ENCODE measurements at regions of chr18 and their contacts with region 1.

Region 1: GRCh38 chr18:3219631-3220335 is at the start of gene MYOM1:
- DNase-seq: no peak
- H3K4me3 Mint-ChIP-seq: no peak within 1 kb of the TSS
- H3K27ac Mint-ChIP-seq: no peak within 1 kb of the TSS
- H3K4me1 Mint-ChIP-seq: no peaks in the 10 kb centered on the region
- H3K27me3 Mint-ChIP-seq: peaks cover 12% of the 10 kb centered on the region
- total RNA-seq, gene MYOM1: 0.22 and 1.4 TPM in 2 replicates

Region 2: GRCh38 chr18:2494921-2495320 is 724.9 kb before region 1 on chr18:
- intact Hi-C with region 1: no loop called
- DNase-seq: no peak
- H3K4me3 Mint-ChIP-seq: no peak overlapping the region
- H3K27ac Mint-ChIP-seq: no peak overlapping the region
- H3K4me1 Mint-ChIP-seq: no peaks in the 10 kb centered on the region
- H3K27me3 Mint-ChIP-seq: peaks cover 6% of the 10 kb centered on the region

Region 3: DNA sequence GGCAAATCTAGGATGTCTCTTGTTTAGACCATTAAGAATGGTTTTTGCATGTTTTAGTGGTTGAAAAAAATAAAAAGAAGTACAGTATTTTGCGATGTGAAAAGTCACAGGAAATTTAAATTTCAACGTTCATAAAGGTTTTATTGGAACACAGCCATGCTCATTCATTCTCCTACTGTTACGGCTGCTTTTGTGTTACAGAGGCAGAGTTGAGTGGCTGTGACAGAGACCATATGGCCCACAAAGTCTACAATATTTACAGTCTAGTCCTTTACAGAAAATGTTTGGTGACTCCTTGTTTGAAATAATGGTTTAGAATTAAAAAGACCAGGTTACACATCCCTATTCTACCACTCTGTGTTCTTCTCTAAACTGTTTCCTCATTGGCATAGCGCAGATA is 48.2 kb before region 1 on chr18:
- intact Hi-C with region 1: loop called (anchors 5 kb)
- DNase-seq: no peak
- H3K4me3 Mint-ChIP-seq: no peak overlapping the region
- H3K27ac Mint-ChIP-seq: no peak overlapping the region
- H3K4me1 Mint-ChIP-seq: peaks cover 8% of the 10 kb centered on the region
- H3K27me3 Mint-ChIP-seq: peaks cover 5% of the 10 kb centered on the region

Region 4: DNA sequence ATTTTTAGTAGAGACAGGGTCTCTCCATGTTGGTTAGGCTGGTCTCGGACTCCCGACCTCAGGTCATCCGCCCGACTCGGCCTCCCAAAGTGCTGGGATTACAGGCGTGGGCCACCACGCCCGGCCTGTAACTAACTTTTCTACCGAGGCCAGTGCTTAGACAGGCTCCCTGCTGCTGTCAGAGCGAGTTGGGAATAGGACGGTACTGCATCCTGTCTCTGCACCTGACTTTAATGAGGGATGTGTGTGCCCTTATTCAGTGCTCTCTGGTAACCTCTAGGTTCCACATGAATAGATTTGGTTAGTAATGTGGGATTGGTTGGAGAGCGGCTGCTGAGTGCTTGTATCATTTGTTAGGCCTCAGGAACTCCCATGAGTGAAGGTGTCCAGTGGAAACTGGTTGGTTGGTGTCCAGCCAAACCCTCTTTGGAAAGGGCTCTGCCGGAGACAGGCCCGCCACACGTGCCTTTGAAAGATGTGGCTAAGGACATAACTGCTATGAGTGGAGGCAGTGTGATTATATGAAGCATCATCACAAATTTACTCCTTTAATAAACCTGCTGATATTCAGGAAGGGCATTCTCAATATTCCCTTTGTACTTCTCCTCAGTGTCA is 36.6 kb before region 1 on chr18:
- intact Hi-C with region 1: no loop called
- DNase-seq: no peak
- H3K4me3 Mint-ChIP-seq: no peak overlapping the region
- H3K27ac Mint-ChIP-seq: no peak overlapping the region
- H3K4me1 Mint-ChIP-seq: no peaks in the 10 kb centered on the region
- H3K27me3 Mint-ChIP-seq: no peaks in the 10 kb centered on the region

Region 5: DNA sequence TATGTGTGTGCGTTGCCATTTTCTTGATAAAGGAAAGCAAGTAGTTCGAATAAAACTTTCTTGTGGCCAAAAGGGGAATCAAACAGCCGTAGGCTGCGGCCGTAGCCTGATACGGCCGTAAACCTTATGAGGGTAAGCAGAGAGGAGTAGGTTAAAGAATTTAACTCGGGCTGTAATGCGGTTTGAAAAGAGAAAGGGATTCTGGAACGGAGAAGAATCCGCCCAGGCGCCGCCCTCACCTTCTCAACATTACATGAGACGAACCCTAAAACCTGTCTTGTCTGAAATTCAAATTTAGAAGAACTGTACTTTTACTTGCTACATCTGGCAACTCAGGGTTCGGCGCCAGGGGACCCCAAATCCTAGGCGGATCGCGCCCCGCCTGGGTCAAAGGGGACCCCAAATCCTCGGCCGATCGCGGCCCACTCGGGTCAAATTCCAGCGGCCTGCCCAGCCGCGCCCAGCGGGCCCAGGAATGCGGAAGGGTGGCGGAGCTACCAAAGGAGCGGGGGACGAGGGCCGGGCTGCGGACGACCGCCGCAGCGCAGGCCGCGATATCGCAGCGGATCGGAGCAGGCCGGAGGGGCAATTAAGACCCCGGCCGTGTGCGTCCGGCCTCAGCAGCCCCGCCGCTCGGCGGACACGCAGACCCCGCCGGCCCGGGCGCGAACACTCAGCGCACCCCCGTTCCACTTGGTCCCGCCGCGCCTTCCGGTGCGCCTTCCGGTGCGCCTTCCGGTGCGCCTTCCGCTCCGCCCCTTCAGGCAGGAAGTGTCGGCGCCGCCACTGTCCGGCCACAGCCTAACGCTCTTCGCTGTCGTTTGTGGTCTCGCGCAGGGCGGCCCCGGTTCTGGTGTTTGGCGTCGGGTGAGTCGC is 41.8 kb after region 1 on chr18 and contains the start of gene MYL12B:
- intact Hi-C with region 1: no loop called
- DNase-seq: peak; percentile 75
- H3K4me3 Mint-ChIP-seq: peak within 1 kb of the TSS; percentile 93
- H3K27ac Mint-ChIP-seq: peak within 1 kb of the TSS; percentile 98
- H3K4me1 Mint-ChIP-seq: peaks cover 82% of the 10 kb centered on the region
- H3K27me3 Mint-ChIP-seq: no peaks in the 10 kb centered on the region
- total RNA-seq, gene MYL12B: 234 and 235 TPM in 2 replicates

Region 6: GRCh38 chr18:3794537-3795348 is 575.0 kb after region 1 on chr18:
- intact Hi-C with region 1: no loop called
- DNase-seq: no peak
- H3K4me3 Mint-ChIP-seq: no peak overlapping the region
- H3K27ac Mint-ChIP-seq: no peak overlapping the region
- H3K4me1 Mint-ChIP-seq: no peaks in the 10 kb centered on the region
- H3K27me3 Mint-ChIP-seq: peaks cover 1% of the 10 kb centered on the region

Measured in activated T-helper 1 cell treated with anti-CD3 and anti-CD28 coated beads, Interleukin-12 subunit alpha, Interleukin-12 subunit beta, Interleukin-2, Interleukin-4 antibody, amounts not matched to agents 30 ng/mL and 10 ng/mL and 1 ng/mL, durations not matched to agents 14 hours and 24 hours and 36 hours (primary cell).